ENCODE measurements at regions of chr6 and their contacts with region 1.

Region 1: GRCh38 chr6:90393232-90393884 is 96.7 kb upstream of the BACH2 start:
- DNase-seq: peak; percentile 63
- H3K4me3 Mint-ChIP-seq: no peak overlapping the region
- H3K27ac Mint-ChIP-seq: no peak overlapping the region
- H3K4me1 Mint-ChIP-seq: peaks cover 25% of the 10 kb centered on the region
- H3K27me3 Mint-ChIP-seq: no peaks in the 10 kb centered on the region
- CTCF ChIP-seq: peak; percentile 56

Region 2: DNA sequence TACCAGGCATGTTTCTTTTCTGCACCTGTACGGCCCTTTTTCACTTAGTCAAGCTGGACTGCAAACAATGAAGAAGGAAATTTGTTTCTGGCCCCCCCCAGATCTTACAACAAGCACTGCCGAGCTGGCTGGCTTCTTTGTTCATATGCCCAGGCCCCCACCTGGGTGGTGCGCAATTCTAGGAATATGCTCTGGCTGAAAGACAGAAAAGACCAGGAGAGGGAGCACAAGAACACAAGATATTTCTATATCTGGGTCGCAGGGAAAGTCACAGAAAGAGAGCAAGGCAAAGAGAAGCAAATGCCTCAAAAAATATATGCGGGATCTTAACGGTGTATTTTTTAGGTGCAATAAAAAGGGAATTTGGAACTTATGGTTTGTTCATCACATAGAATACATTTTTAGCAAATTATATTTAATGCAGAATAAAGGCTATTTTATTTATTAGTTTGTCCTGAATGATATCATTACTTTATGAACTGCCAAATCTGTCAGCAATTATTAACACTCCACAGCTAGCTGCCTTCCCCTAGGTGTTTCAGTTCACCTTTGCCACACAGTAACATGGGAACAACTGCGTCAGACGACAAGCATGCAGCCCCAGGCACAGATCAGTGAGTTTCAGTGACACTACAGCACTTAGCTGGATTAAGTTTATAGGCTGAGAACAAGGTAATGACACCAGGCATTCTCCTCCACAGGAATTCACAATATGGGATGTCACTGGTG is 422.6 kb before region 1 on chr6:
- CTCF ChIA-PET with region 1: no interaction called
- intact Hi-C with region 1: loop called (anchors 1 kb)
- DNase-seq: peak; percentile 64
- H3K4me3 Mint-ChIP-seq: no peak overlapping the region
- H3K27ac Mint-ChIP-seq: no peak overlapping the region
- H3K4me1 Mint-ChIP-seq: peaks cover 2% of the 10 kb centered on the region
- H3K27me3 Mint-ChIP-seq: no peaks in the 10 kb centered on the region
- CTCF ChIP-seq: peak; percentile 25

Region 3: GRCh38 chr6:90179190-90180169 is 213.9 kb before region 1 on chr6:
- CTCF ChIA-PET with region 1: no interaction called
- intact Hi-C with region 1: loop called (anchors 10 kb)
- DNase-seq: no peak
- H3K4me3 Mint-ChIP-seq: no peak overlapping the region
- H3K27ac Mint-ChIP-seq: no peak overlapping the region
- H3K4me1 Mint-ChIP-seq: peaks cover 25% of the 10 kb centered on the region
- H3K27me3 Mint-ChIP-seq: no peaks in the 10 kb centered on the region
- CTCF ChIP-seq: peak; percentile 45

Region 4: DNA sequence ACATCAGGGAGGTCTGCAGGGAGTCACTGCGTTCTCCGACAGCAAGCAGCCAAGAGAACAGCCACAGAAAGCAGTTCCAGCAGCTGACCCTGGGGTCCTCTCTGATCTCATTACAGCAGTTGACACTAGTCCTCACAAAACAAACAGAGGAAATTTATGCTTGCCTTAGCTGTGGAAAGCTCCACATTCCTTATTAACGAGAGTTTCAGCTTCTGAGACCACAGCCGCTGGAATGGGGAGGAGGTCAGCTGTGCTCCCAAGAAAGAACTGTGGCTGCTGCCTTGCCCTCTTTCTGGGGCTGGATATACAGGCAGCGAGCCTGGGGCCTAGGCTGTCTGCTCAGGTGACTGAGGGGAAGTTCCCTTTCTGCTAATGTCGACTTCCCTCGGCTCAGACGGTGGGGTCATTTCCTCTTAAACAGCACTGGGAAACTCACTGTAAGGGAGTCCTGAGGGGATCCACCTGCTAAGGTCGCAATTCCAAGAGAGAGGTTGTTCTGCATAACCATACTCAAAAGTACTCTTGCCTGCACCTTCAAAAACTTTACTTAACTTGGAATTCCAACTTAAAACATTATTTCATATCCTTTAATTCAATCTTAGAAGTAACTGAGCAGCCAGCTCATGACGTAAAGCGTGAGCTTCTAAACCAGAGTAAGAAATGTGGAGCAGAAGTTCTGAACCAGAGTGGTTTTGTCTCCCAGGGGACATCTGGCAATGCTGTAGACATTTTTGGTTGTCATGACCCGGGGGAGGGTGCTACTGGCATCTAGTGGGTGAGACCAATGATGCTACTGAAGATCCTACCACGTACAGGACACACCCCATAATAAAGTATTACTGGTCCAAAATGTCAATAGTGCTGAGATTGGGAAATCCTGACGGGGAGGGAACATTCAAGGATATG is 177.0 kb before region 1 on chr6:
- CTCF ChIA-PET with region 1: interaction called, 8 read pairs
- intact Hi-C with region 1: loop called (anchors 10 kb)
- DNase-seq: no peak
- H3K4me3 Mint-ChIP-seq: no peak overlapping the region
- H3K27ac Mint-ChIP-seq: no peak overlapping the region
- H3K4me1 Mint-ChIP-seq: peaks cover 6% of the 10 kb centered on the region
- H3K27me3 Mint-ChIP-seq: no peaks in the 10 kb centered on the region
- CTCF ChIP-seq: no peak

Region 5: DNA sequence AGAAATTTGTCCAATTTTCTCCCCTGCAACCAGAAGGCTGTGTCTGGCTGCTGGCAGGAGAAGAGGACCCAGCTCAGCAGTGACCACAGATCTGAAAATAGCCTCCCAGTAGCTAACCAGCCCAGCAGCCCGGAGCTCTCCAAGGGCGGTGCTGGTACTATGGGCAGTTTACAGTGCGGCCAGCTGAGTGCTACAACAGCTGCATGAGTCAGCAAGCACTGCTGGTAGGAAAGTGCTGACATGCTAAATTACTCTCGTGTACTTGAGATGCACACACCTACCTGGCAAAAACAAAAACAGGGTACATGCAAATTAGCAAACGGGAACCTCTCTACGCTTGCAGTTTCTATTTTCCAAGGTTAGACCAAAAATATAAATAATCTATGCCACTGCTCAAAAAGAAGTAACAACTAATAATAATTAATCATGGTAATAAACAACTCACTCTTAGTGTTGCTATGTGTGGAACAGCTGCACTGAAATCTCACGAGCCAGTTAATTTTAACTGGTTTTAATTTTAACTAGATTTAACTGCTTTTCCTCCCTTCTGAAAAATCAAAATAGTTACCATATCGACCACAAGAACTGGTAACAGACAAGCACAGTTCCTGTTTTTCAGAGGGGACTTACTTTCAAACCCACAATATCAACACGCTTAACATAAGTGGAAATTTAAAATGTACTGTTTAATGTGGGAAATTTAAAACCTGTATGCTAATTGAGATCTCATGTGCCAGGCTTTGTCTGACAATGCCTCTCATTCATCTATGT is 107.6 kb before region 1 on chr6:
- CTCF ChIA-PET with region 1: no interaction called
- intact Hi-C with region 1: loop called (anchors 5 kb)
- DNase-seq: peak; percentile 74
- H3K4me3 Mint-ChIP-seq: peak overlapping the region; percentile 72
- H3K27ac Mint-ChIP-seq: peak overlapping the region; percentile 96
- H3K4me1 Mint-ChIP-seq: peaks cover 40% of the 10 kb centered on the region
- H3K27me3 Mint-ChIP-seq: no peaks in the 10 kb centered on the region
- CTCF ChIP-seq: no peak

Region 6: GRCh38 chr6:90411292-90411781 is 18.0 kb after region 1 on chr6:
- CTCF ChIA-PET with region 1: interaction called, 14 read pairs
- intact Hi-C with region 1: no loop called
- DNase-seq: peak; percentile 86
- H3K4me3 Mint-ChIP-seq: no peak overlapping the region
- H3K27ac Mint-ChIP-seq: peak overlapping the region; percentile 41
- H3K4me1 Mint-ChIP-seq: peaks cover 70% of the 10 kb centered on the region
- H3K27me3 Mint-ChIP-seq: no peaks in the 10 kb centered on the region
- CTCF ChIP-seq: no peak

Region 7: DNA sequence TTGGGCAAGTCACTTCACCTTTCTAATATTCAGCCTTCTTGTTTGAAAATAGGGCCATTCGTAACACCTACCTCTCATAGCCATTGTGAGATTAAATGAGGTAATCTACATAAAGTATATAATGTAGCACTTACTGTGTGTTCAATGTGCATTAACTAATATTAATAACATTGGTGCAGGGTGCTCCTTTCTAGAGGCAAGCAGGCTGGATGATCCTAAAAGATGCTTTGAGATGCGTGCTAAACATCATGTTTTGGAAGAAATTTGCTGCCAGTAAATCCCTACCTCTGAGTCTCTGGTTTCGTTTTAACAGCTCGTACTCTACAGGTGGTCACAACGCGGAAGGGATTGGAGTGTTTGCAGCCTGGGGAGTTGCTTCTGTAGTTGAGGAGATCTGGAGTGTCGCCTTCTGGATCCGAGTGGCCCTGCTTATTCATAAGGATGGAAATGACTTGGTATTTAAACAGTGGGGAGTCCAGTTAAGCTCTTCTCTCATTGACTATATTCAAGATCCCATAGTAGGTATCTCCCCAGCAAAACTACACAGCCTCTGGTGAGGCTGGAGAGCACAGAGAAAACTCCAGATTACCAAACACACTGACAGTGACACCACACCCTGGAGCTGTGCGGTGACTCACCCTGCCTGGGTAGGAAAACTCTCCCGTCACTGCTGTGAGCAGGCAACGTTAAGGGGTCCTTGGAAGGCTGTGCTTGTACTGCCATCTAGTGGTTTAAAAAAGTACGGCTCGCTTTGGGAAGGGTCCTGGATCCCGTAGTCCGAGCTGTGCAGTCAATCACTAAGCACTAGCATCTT is 85.6 kb after region 1 on chr6:
- CTCF ChIA-PET with region 1: interaction called, 8 read pairs
- intact Hi-C with region 1: loop called (anchors 5 kb)
- DNase-seq: peak; percentile 89
- H3K4me3 Mint-ChIP-seq: peak overlapping the region; percentile 15
- H3K27ac Mint-ChIP-seq: peak overlapping the region; percentile 70
- H3K4me1 Mint-ChIP-seq: peaks cover 17% of the 10 kb centered on the region
- H3K27me3 Mint-ChIP-seq: no peaks in the 10 kb centered on the region
- CTCF ChIP-seq: peak; percentile 75